A549 (cell line): ENCODE measurements at regions of chr14 and their contacts with region 1.

Region 1: GRCh38 chr14:64510825-64511671 is 6.5 kb downstream of the ZBTB1 start:
- DNase-seq: peak; percentile 32 to 76
- ATAC-seq: peak; percentile 81 to 83; a peak in 5 of 6 replicates
- H3K4me3 ChIP-seq: no peak overlapping the region
- H3K27ac ChIP-seq: peak overlapping the region; percentile 34 to 71
- H3K4me1 ChIP-seq: peaks cover 75% of the 10 kb centered on the region
- CTCF ChIP-seq: peak; percentile 96
- EP300 ChIP-seq: no peak
- POLR2A ChIP-seq: no peak
- RAD21 ChIP-seq: peak; percentile 53

Region 2: DNA sequence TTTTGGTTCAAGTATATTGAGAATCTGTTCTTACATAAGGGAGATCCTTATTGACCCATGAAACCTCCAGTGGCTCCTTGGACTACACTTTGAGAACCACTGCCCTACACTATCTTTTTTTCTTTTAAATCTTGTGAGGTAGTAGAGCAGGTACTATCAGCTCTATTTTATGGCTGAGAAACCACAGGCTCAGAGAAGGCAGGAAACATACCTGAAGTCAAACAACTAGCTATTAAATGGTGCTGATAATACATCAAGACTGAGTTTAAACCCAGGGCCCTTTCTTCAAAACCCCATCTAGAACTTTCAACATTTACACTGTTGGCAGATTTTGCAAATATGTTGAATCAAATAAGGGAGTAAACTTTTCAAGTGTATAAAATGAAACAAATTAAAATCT is 14.3 kb before region 1 on chr14:
- CTCF ChIA-PET with region 1: interaction called, 13 read pairs
- POLR2A ChIA-PET with region 1: interaction called, 3 read pairs
- DNase-seq: no peak
- ATAC-seq: no peak
- H3K4me3 ChIP-seq: no peak overlapping the region
- H3K27ac ChIP-seq: no peak overlapping the region
- H3K4me1 ChIP-seq: peaks cover 23% of the 10 kb centered on the region
- CTCF ChIP-seq: no peak
- EP300 ChIP-seq: no peak
- POLR2A ChIP-seq: no peak
- RAD21 ChIP-seq: no peak

Region 3: GRCh38 chr14:65042731-65043372 is 531.8 kb after region 1 on chr14:
- CTCF ChIA-PET with region 1: no interaction called
- POLR2A ChIA-PET with region 1: no interaction called
- DNase-seq: no peak
- ATAC-seq: no peak
- H3K4me3 ChIP-seq: no peak overlapping the region
- H3K27ac ChIP-seq: no peak overlapping the region
- H3K4me1 ChIP-seq: no peaks in the 10 kb centered on the region
- CTCF ChIP-seq: no peak
- EP300 ChIP-seq: no peak
- POLR2A ChIP-seq: no peak
- RAD21 ChIP-seq: no peak